ENCODE measurements at regions of chr7 and their contacts with region 1.

Region 1: GRCh38 chr7:77657427-77658224 is 38.6 kb upstream of the RSBN1L start:
- DNase-seq: peak; percentile 38
- ATAC-seq: no peak
- H3K4me3 Mint-ChIP-seq: no peak overlapping the region
- H3K27ac Mint-ChIP-seq: no peak overlapping the region
- H3K4me1 Mint-ChIP-seq: no peaks in the 10 kb centered on the region
- H3K27me3 Mint-ChIP-seq: no peaks in the 10 kb centered on the region

Region 2: DNA sequence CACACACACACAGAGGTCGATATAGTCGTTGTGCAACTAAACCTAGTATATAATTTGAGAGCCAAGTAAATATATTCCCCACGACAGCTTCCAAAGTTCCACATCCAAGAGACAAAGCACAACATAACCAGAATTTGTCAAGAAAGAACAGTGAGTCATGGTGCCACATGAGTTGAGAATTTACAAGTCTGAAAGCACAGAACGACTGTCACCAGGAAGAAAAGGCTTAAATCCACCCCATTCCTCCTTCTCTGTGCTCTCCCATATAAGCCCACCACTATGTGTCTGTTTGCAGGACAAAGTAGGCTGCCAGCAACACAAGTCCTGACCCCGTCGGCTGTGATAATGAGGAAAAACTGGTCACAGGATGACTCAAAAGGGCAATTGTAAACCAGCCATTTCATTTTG is 274.3 kb before region 1 on chr7:
- CTCF ChIA-PET with region 1: no interaction called
- POLR2A ChIA-PET with region 1: no interaction called
- DNase-seq: no peak
- ATAC-seq: no peak
- H3K4me3 Mint-ChIP-seq: no peak overlapping the region
- H3K27ac Mint-ChIP-seq: no peak overlapping the region
- H3K4me1 Mint-ChIP-seq: peaks cover 9% of the 10 kb centered on the region
- H3K27me3 Mint-ChIP-seq: peaks cover 3% of the 10 kb centered on the region

Region 3: DNA sequence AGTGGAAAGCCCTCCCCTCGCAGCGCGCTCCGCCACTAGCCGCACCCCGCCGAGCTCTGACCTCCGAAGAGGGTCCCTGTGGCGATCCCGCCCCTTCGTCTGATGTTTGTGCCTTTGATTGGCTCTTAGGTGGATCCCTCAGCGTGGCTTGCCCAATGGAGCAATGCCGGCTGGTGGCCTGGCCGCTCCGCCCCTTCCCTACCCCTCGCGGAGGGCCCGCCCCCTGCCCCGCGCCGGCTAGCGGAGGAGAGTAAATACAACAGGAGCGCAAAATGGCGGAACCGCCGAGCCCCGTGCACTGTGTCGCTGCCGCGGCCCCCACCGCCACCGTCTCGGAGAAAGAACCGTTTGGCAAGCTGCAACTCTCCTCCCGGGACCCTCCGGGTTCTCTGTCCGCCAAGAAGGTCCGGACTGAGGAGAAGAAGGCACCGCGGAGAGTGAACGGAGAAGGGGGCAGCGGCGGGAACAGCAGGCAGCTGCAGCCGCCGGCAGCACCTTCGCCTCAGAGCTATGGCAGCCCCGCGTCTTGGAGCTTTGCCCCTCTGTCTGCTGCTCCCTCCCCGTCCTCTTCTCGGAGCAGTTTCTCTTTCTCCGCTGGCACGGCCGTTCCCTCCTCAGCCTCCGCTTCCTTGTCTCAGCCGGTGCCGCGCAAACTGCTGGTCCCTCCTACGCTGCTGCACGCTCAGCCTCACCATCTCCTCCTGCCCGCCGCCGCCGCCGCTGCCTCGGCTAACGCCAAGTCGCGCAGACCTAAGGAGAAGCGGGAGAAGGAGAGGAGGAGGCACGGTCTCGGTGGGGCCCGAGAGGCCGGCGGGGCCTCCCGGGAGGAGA is 38.8 kb after region 1 on chr7 and contains the start of gene RSBN1L:
- CTCF ChIA-PET with region 1: interaction called, 16 read pairs
- POLR2A ChIA-PET with region 1: interaction called, 3 read pairs
- DNase-seq: peak; percentile 99
- ATAC-seq: peak; percentile 98
- H3K4me3 Mint-ChIP-seq: peak within 1 kb of the TSS; percentile 98
- H3K27ac Mint-ChIP-seq: peak within 1 kb of the TSS; percentile 96
- H3K4me1 Mint-ChIP-seq: peaks cover 45% of the 10 kb centered on the region
- H3K27me3 Mint-ChIP-seq: no peaks in the 10 kb centered on the region
- total RNA-seq, gene RSBN1L: 24.5 to 27.4 TPM

Region 4: GRCh38 chr7:77759294-77759889 is 101.8 kb after region 1 on chr7:
- CTCF ChIA-PET with region 1: interaction called, 126 read pairs
- POLR2A ChIA-PET with region 1: no interaction called
- DNase-seq: peak; percentile 81
- ATAC-seq: peak; percentile 76
- H3K4me3 Mint-ChIP-seq: no peak overlapping the region
- H3K27ac Mint-ChIP-seq: no peak overlapping the region
- H3K4me1 Mint-ChIP-seq: peaks cover 15% of the 10 kb centered on the region
- H3K27me3 Mint-ChIP-seq: no peaks in the 10 kb centered on the region

Region 5: DNA sequence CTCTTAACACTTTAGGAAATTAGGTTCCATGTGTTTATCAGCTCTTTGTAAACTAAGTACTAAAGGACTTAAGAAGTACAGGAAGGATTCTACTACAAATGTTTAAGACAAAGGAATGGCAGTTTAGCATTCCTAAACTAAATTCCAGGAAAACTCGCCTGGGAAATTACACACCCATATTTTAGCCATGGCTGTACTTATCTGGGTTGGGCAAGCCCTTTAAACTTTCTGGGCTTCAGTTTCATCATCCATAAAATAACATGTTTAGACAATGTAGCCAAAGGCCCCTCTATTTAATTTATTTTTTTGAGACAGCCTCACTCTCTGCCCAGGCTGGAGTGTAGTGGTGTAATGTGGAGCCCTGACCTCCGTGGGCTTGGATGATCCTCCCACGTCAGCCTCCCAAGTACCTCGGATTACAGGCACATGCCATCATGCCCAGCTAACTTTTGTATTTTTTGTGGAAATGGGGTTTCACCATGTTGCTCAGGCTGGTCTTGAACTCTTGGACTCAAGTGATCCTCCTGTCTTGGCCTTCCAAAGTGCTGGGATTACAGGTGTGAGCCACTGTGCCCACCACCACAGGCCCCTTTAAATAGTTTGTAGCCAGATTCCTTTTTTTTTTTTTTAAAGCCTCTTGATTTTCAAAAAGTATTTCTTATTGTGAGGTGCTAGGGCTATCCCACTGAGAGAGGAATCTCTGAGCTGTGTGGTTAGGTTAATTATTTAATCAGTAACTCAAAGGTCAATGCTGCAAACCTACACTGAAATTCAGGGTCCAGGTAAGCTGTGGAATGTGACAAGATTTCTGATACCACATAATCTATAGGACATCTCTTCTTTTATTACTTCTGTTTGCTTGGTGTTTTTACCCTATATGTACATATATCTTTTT is 108.5 kb after region 1 on chr7:
- CTCF ChIA-PET with region 1: interaction called, 126 read pairs
- POLR2A ChIA-PET with region 1: no interaction called
- DNase-seq: no peak
- ATAC-seq: no peak
- H3K4me3 Mint-ChIP-seq: no peak overlapping the region
- H3K27ac Mint-ChIP-seq: no peak overlapping the region
- H3K4me1 Mint-ChIP-seq: no peaks in the 10 kb centered on the region
- H3K27me3 Mint-ChIP-seq: no peaks in the 10 kb centered on the region

Region 6: GRCh38 chr7:77855371-77856083 is 197.9 kb after region 1 on chr7:
- CTCF ChIA-PET with region 1: no interaction called
- POLR2A ChIA-PET with region 1: no interaction called
- DNase-seq: no peak
- ATAC-seq: no peak
- H3K4me3 Mint-ChIP-seq: no peak overlapping the region
- H3K27ac Mint-ChIP-seq: no peak overlapping the region
- H3K4me1 Mint-ChIP-seq: peaks cover 15% of the 10 kb centered on the region
- H3K27me3 Mint-ChIP-seq: no peaks in the 10 kb centered on the region

Region 7: GRCh38 chr7:77940647-77941046 is 283.0 kb after region 1 on chr7:
- CTCF ChIA-PET with region 1: interaction called, 20 read pairs
- POLR2A ChIA-PET with region 1: no interaction called
- DNase-seq: peak; percentile 24
- ATAC-seq: no peak
- H3K4me3 Mint-ChIP-seq: no peak overlapping the region
- H3K27ac Mint-ChIP-seq: no peak overlapping the region
- H3K4me1 Mint-ChIP-seq: peaks cover 7% of the 10 kb centered on the region
- H3K27me3 Mint-ChIP-seq: no peaks in the 10 kb centered on the region